Gastrocnemius medialis (tissue), 4 donors: ENCODE measurements at regions of chr12 and their contacts with region 1.

Region 1: GRCh38 chr12:104656901-104657300 is 200.2 kb downstream of the CHST11 start:
- DNase-seq: peak in 1 of 2 donors; percentile 60
- ATAC-seq: peak; percentile 76 to 86
- H3K4me3 ChIP-seq: no peak overlapping the region
- H3K27ac ChIP-seq: no peak overlapping the region
- H3K4me1 ChIP-seq: no peaks in the 10 kb centered on the region
- H3K27me3 ChIP-seq: no peaks in the 10 kb centered on the region
- CTCF ChIP-seq: no peak
- POLR2A ChIP-seq: no peak

Region 2: DNA sequence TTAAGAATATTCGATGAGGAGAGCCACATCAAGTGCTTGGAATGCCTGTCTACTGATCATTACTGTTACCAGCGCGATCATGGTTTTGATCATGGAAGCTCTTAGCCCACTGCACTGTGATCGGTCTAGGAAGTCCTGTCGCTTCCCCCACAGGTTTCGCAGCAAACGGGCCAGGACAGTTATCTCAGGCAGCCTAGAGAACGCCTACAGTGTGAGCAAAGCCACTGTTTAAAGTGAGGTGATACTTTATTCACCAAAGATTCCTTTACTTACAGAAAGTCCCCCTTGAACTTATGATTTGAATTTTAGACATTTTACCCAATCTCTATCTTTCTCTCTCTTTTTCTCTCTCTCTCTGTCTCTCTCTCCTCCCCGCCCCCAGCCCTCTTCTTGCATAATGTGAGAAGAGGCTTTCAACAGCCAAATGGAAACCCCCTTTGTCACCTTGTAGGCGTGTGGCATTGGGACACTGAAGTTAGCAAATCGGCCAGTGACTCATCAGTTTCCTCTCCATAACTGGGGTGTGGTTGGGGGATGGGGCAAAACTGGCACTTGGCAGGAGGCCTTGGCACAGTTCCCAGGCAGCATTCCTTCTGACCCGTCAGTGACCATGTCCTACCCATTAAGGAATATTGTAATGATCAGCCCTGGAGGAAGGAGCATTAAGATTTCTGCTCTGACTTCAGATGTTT is 14.7 kb after region 1 on chr12:
- in situ Hi-C with region 1: no loop called
- intact Hi-C with region 1: loop called (anchors 2 kb)
- DNase-seq: peak; percentile 54 to 78
- ATAC-seq: peak; percentile 55 to 74
- H3K4me3 ChIP-seq: no peak overlapping the region
- H3K27ac ChIP-seq: peak overlapping the region in 3 of 4 donors; percentile 54 to 68 (median 54)
- H3K4me1 ChIP-seq: peaks cover 14 to 23% of the 10 kb centered on the region in 2 donors
- H3K27me3 ChIP-seq: no peaks in the 10 kb centered on the region
- CTCF ChIP-seq: no peak
- POLR2A ChIP-seq: no peak